AG04450 (cell line): ENCODE measurements at regions of chr14 and their contacts with region 1.

Region 1: GRCh38 chr14:21498553-21499526 is 12.3 kb downstream of the METTL3 start:
- DNase-seq: no peak
- H3K4me3 ChIP-seq: no peak overlapping the region
- H3K27ac ChIP-seq: peak overlapping the region; percentile 49
- H3K27me3 ChIP-seq: no peaks in the 10 kb centered on the region
- CTCF ChIP-seq: peak; percentile 54

Region 2: GRCh38 chr14:21476925-21477681 is 21.7 kb before region 1 on chr14 and contains the starts of genes RAB2B and TOX4:
- CTCF ChIA-PET with region 1: interaction called, 35 read pairs
- POLR2A ChIA-PET with region 1: no interaction called
- DNase-seq: peak; percentile 97
- H3K4me3 ChIP-seq: peak within 1 kb of the TSS; percentile 97
- H3K27ac ChIP-seq: peak within 1 kb of the TSS; percentile 71
- H3K27me3 ChIP-seq: no peaks in the 10 kb centered on the region
- CTCF ChIP-seq: peak; percentile 99
- polyA plus RNA-seq, gene RAB2B: 32.6 and 36.7 TPM in 2 replicates
- polyA plus RNA-seq, gene TOX4: 93.7 and 94.6 TPM in 2 replicates

Region 3: GRCh38 chr14:21486640-21487087 is 12.2 kb before region 1 on chr14:
- CTCF ChIA-PET with region 1: interaction called, 40 read pairs
- POLR2A ChIA-PET with region 1: no interaction called
- DNase-seq: peak; percentile 44
- H3K4me3 ChIP-seq: no peak overlapping the region
- H3K27ac ChIP-seq: no peak overlapping the region
- H3K27me3 ChIP-seq: no peaks in the 10 kb centered on the region
- CTCF ChIP-seq: no peak

Region 4: GRCh38 chr14:21510735-21511657 is 12.2 kb after region 1 on chr14 and contains the start of gene METTL3:
- CTCF ChIA-PET with region 1: interaction called, 54 read pairs
- POLR2A ChIA-PET with region 1: interaction called, 12 read pairs
- DNase-seq: peak; percentile 97
- H3K4me3 ChIP-seq: peak within 1 kb of the TSS; percentile 99
- H3K27ac ChIP-seq: peak within 1 kb of the TSS; percentile 86
- H3K27me3 ChIP-seq: no peaks in the 10 kb centered on the region
- CTCF ChIP-seq: no peak
- polyA plus RNA-seq, gene METTL3: 62.3 and 66.3 TPM in 2 replicates

Region 5: DNA sequence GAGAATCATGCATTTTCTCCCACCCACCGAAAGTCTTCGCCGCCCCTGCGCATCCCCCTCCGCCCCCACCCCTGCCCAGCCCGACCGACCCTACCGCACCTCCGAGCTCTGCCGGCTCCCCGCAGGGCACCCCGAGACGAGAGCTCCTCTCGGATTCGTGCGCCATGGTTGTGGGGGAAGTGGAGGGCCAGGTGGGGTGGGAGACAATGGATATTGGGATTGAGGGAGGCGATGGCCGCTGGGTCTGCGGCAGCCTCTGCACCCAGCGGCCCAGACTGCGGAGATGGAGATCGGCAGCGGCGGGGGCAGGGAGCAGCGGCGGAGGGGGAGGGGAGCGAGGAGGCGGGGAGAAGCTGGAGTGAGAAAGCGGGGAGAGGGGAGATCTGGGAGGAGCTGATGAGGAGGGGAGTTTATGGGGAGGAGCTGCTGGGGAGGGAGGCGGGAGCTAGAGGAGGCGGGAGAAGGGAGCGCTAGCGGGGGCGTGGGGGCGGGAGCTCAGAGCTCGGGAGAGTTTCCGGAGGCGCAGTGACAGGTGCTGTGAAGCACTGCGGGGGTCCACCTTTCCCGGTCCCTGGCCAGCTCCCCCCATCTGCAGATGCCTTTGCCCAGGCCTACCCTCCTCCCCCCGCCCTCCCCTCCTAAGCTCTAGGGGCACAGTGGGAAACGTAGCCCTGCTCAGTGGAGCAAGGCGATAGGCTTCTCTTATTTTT is 27.3 kb after region 1 on chr14 and contains the start of gene SALL2:
- CTCF ChIA-PET with region 1: interaction called, 24 read pairs
- POLR2A ChIA-PET with region 1: interaction called, 3 read pairs
- DNase-seq: peak; percentile 27
- H3K4me3 ChIP-seq: peak within 1 kb of the TSS; percentile 76
- H3K27ac ChIP-seq: no peak within 1 kb of the TSS
- H3K27me3 ChIP-seq: peaks cover 12% of the 10 kb centered on the region
- CTCF ChIP-seq: no peak
- polyA plus RNA-seq, gene SALL2: 15.0 and 17.1 TPM in 2 replicates

Region 6: DNA sequence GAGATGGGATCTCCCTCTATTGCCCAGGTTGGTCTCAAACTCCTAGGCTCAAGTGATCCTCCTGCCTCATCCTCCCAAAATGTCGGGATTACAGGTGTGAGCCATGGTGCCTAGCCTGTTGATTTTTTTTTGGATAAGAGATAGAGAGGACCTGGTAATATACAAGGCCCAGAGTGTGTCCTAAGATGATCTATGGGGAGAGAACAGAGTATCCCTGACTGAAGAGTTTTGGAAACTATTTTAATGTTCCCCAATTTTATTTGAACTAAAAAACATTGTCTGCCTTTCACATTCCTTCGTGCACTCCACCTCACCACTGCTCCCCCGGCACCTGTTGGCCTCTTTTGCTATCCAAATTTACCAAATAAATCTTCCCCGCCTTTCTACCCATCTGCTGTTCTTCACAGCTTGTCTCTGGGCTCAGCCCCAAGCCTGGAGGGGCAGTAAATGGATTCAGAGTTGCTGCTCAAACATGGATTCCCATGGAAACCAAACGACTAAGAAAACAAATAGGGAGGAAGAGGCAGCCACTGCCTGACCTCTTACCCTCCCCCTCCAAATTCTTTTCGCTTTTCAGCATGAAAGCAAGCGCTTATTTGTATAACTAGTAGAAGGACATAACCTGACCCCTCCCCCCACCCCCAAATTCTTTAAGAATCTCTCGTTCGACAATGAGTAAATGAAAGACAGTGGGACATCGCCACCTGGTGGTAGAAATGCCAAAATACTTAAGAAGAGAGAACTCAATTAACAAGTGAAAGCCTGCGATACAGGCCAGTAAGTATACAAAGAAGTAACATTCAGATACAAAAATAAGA is 58.5 kb after region 1 on chr14:
- CTCF ChIA-PET with region 1: interaction called, 38 read pairs
- POLR2A ChIA-PET with region 1: interaction called, 3 read pairs
- DNase-seq: peak; percentile 76
- H3K4me3 ChIP-seq: peak overlapping the region; percentile 49
- H3K27ac ChIP-seq: no peak overlapping the region
- H3K27me3 ChIP-seq: no peaks in the 10 kb centered on the region
- CTCF ChIP-seq: peak; percentile 70